HepG2 (cell line): ENCODE measurements at regions of chr20 and their contacts with region 1.

Region 1: DNA sequence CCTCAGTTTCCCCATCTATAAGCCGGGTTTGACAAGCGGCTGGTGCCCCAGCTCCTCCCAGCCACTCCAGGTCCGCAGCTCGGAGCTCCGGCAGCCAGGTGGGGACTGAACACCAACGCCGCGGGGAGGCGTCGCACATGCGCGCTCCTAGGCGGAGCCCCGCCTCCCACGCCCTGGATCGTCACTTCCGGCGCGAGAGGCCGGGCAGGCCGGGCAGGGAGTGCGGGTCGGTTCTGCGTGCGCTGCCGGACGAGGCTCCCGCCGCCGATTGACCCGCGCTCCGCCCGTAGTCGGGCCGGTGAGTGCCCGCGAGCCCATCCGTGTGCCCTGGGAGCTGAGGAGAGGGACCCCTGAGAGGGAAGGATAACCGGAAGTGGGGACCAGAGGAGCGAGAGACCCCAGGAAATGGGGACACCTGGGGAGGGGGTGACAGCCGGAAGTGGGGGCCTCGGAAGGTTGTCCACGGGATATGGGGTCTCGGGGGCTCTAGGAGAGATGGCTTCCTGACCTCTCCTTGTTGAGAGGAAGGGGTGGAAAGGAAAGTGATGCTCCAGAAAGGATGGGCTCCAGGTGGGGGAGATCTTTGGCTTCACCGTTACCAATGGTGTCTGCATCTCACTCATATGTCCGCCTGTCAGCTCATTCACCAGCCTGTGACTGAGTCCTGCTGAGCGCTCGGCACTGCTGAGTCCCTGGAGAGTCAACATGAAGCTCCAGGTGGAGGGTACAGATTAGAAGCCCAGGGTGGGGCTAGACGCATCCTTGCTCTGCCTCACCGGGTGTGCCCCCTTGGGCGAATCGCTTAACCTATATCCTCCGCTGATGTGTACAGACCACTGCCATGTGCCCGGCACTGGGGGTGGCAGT is at the start of gene TTPAL:
- DNase-seq: peak; percentile 89
- ATAC-seq: peak; percentile 96
- H3K4me3 ChIP-seq: peak within 1 kb of the TSS; percentile 74 to 86 (median 82)
- H3K27ac ChIP-seq: peak within 1 kb of the TSS; percentile 52
- H3K4me1 ChIP-seq: peaks cover 46% of the 10 kb centered on the region
- H3K27me3 ChIP-seq: no peaks in the 10 kb centered on the region; a peak in 1 of 5 replicates
- CTCF ChIP-seq: peak; percentile 93
- EP300 ChIP-seq: peak; percentile 42 to 53; a peak in 2 of 4 replicates
- POLR2A ChIP-seq: peak; percentile 91 to 100
- RAD21 ChIP-seq: peak; percentile 89
- total RNA-seq, gene TTPAL: 18.8 and 25.0 TPM in 2 replicates

Region 2: DNA sequence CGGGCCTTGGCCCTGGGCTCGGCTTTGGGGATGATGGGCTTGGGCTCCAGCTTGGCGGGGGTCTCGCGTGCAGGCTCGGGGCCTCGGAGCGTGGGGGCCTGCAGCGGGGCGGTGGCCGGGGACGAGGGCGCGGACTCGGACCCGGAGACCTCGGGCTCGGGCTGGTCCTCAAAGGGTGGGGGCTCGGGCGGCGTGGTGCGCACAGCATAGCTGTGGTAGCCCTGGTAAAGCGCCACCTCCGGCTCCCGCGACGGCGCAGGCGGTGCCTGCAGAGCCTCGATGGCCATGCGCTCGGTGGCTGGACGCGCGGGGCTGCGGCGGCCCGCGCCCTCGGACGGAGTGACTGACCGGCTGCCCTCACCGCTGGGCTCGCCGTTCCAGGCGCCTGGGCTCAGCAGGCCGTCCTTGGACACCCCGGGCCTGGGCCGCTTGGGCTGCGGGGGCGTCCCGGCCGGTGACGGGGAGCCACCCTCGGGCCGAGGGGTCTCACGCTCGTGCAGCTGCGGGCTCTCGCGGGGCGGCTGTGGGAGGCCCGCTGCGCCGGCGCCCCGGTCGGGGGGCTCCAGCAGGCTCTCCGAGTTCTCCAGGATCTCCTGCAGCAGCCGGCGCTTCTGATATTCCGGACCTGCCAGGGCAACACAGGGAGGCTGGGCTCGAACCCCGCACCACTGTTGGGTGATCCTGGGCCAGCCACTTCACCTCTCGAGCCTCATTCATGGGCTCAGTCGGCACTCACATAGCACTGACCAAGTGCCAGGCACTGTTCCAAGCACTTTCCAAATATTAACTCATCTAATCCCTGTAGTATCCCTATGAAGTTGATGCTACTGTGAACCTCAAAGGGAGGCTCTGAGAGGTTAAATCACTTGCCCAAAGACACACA is 359.9 kb before region 1 on chr20:
- CTCF ChIA-PET with region 1: interaction called, 11 read pairs
- POLR2A ChIA-PET with region 1: no interaction called
- in situ Hi-C with region 1: loop called (anchors 10 kb)
- intact Hi-C with region 1: loop called (anchors 1 kb)
- DNase-seq: no peak
- ATAC-seq: no peak; the same call in 2 of the 3 replicates
- H3K4me3 ChIP-seq: no peak overlapping the region
- H3K27ac ChIP-seq: no peak overlapping the region
- H3K4me1 ChIP-seq: peaks cover 17% of the 10 kb centered on the region
- H3K27me3 ChIP-seq: peaks cover 7 to 54% of the 10 kb centered on the region in 2 experiments
- CTCF ChIP-seq: no peak
- EP300 ChIP-seq: no peak
- POLR2A ChIP-seq: no peak
- RAD21 ChIP-seq: no peak

Region 3: GRCh38 chr20:44310664-44311639 is 165.0 kb before region 1 on chr20 and contains the start of gene FITM2:
- CTCF ChIA-PET with region 1: interaction called, 6 read pairs
- POLR2A ChIA-PET with region 1: interaction called, 7 read pairs
- in situ Hi-C with region 1: loop called (anchors 5 kb)
- intact Hi-C with region 1: no loop called
- DNase-seq: peak; percentile 98
- ATAC-seq: peak; percentile 93
- H3K4me3 ChIP-seq: peak within 1 kb of the TSS; percentile 70 to 96 (median 78)
- H3K27ac ChIP-seq: peak within 1 kb of the TSS; percentile 37
- H3K4me1 ChIP-seq: peaks cover 27% of the 10 kb centered on the region
- H3K27me3 ChIP-seq: peaks cover 2 to 4% of the 10 kb centered on the region in 2 experiments; a peak in 1 of 5 replicates
- CTCF ChIP-seq: peak; percentile 100
- EP300 ChIP-seq: 0 out of 4 replicates have a peak, but pooled peaks of 1 of the 2 experiments have one; percentile 37
- POLR2A ChIP-seq: peak; percentile 75 to 97
- RAD21 ChIP-seq: peak; percentile 100
- total RNA-seq, gene FITM2: 13.6 and 24.5 TPM in 2 replicates

Region 4: GRCh38 chr20:44398303-44398702 is 77.6 kb before region 1 on chr20:
- CTCF ChIA-PET with region 1: no interaction called
- POLR2A ChIA-PET with region 1: interaction called, 14 read pairs
- in situ Hi-C with region 1: no loop called
- intact Hi-C with region 1: loop called (anchors 2 kb)
- DNase-seq: no peak
- ATAC-seq: no peak
- H3K4me3 ChIP-seq: no peak overlapping the region
- H3K27ac ChIP-seq: no peak overlapping the region
- H3K4me1 ChIP-seq: peaks cover 85% of the 10 kb centered on the region
- H3K27me3 ChIP-seq: no peaks in the 10 kb centered on the region; a peak in 1 of 5 replicates
- CTCF ChIP-seq: no peak
- EP300 ChIP-seq: no peak
- POLR2A ChIP-seq: no peak
- RAD21 ChIP-seq: no peak

Region 5: GRCh38 chr20:44435630-44436335 is 40.1 kb before region 1 on chr20:
- CTCF ChIA-PET with region 1: no interaction called
- POLR2A ChIA-PET with region 1: interaction called, 19 read pairs
- in situ Hi-C with region 1: no loop called
- intact Hi-C with region 1: no loop called
- DNase-seq: peak; percentile 90
- ATAC-seq: peak; percentile 1; the same call in 2 of the 3 replicates
- H3K4me3 ChIP-seq: no peak overlapping the region
- H3K27ac ChIP-seq: peak overlapping the region; percentile 33
- H3K4me1 ChIP-seq: peaks cover 89% of the 10 kb centered on the region
- H3K27me3 ChIP-seq: no peaks in the 10 kb centered on the region
- CTCF ChIP-seq: no peak
- EP300 ChIP-seq: no peak
- POLR2A ChIP-seq: no peak
- RAD21 ChIP-seq: no peak

Region 6: DNA sequence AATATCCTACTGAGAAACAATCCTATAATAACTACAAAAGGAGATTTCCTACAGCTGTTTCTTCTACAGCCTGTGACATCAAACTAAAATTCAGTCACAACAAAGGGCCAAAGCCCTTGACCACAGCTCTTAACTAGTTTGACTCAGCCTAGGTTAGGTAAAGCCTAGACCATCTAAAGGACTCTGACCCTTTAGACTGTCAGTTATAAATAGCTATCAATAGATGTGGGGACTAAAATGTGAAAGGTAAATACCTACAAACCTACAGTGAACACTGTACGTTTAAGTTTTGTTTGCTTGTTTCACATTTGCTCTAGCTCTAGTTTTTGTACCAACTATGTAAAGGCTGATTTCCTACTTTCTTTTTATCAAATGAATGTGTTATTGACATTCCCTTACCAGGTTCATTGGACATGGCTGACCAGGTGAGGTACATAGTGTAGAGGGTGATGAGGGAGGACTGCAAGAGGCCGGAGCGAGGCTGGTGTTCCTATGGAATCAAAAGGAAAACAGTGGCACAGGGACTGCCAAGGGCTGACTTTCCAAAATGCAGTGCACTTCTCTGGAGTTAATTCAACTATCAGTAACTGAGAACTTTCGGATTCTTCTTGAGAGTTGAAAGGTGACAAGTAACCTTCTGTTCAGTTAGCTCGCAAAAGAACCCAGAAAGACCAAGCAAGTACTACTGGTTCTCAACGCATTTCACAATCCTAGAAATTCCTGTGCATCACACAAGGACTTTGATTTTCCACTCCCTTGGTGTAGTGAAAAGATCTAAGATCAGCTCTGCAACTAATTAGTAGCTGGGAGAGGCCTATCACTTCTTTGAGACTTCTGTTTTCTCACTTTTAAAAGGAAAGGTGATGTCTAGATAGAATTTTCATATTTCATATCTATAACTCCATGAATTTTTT is 28.7 kb after region 1 on chr20:
- CTCF ChIA-PET with region 1: no interaction called
- POLR2A ChIA-PET with region 1: interaction called, 13 read pairs
- in situ Hi-C with region 1: no loop called
- intact Hi-C with region 1: no loop called
- DNase-seq: peak; percentile 79
- ATAC-seq: peak; percentile 93
- H3K4me3 ChIP-seq: no peak overlapping the region
- H3K27ac ChIP-seq: peak overlapping the region; percentile 48
- H3K4me1 ChIP-seq: peaks cover 23% of the 10 kb centered on the region
- H3K27me3 ChIP-seq: no peaks in the 10 kb centered on the region
- CTCF ChIP-seq: no peak
- EP300 ChIP-seq: no peak
- POLR2A ChIP-seq: no peak
- RAD21 ChIP-seq: no peak

Region 7: GRCh38 chr20:44609511-44610312 is 133.8 kb after region 1 on chr20:
- CTCF ChIA-PET with region 1: interaction called, 24 read pairs
- POLR2A ChIA-PET with region 1: interaction called, 8 read pairs
- in situ Hi-C with region 1: loop called (anchors 5 kb)
- intact Hi-C with region 1: loop called (anchors 1 kb)
- DNase-seq: peak; percentile 95
- ATAC-seq: peak; percentile 97
- H3K4me3 ChIP-seq: peak overlapping the region; percentile 68 to 79 (median 74)
- H3K27ac ChIP-seq: peak overlapping the region; percentile 57
- H3K4me1 ChIP-seq: peaks cover 16% of the 10 kb centered on the region
- H3K27me3 ChIP-seq: no peaks in the 10 kb centered on the region; a peak in 1 of 5 replicates
- CTCF ChIP-seq: peak; percentile 100
- EP300 ChIP-seq: peak; percentile 28 to 40; a peak in 2 of 4 replicates
- POLR2A ChIP-seq: peak; percentile 77 to 78
- RAD21 ChIP-seq: peak; percentile 99